ENCODE measurements at regions of chr10 and their contacts with region 1.

Region 1: DNA sequence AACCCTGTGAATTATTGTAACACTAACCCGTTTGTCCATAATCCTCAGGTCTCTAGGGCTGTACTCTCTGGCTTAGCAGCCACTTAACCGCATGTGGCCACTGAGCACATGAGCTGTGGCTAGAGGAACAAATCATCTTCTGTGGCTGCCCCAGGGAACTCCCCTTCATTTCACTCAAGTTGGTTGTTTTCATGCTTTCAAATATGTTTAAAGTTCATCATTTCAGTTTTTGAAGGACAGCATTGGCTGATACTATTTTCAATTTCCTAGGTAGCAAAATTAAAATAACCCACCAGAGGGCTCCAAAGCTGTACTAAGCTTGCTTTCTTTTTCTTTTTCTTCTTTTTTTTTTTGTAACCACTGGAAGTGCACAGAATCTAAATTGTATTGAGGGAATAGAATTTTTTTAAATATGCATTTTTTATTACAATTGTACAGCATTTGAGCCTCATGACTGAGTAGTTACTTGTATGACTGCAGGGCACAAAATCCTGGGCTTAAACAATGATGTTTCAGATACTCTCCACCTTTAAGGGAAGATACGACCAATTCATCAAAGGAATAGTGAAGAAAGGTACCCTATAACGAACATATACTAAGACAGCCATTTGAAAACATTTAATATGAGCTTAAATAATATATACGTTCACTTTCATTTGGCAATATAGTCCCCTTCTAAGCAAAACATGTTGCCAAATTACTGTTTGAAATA is 38.6 kb downstream of the MRC1 start:
- DNase-seq: no peak
- ATAC-seq: peak; percentile 38
- H3K4me3 ChIP-seq: no peak overlapping the region
- H3K27ac ChIP-seq: no peak overlapping the region
- H3K4me1 ChIP-seq: no peaks in the 10 kb centered on the region
- H3K27me3 ChIP-seq: no peaks in the 10 kb centered on the region

Region 2: GRCh38 chr10:18238870-18239485 is 391.2 kb after region 1 on chr10:
- intact Hi-C with region 1: loop called (anchors 5 kb)
- DNase-seq: no peak
- ATAC-seq: peak; percentile 73
- H3K4me3 ChIP-seq: no peak overlapping the region
- H3K27ac ChIP-seq: no peak overlapping the region
- H3K4me1 ChIP-seq: peaks cover 4 to 6% of the 10 kb centered on the region in 2 donors
- H3K27me3 ChIP-seq: no peaks in the 10 kb centered on the region